Posterior vena cava (tissue), 2 donors: ENCODE measurements at regions of chr1 and their contacts with region 1.

Region 1: DNA sequence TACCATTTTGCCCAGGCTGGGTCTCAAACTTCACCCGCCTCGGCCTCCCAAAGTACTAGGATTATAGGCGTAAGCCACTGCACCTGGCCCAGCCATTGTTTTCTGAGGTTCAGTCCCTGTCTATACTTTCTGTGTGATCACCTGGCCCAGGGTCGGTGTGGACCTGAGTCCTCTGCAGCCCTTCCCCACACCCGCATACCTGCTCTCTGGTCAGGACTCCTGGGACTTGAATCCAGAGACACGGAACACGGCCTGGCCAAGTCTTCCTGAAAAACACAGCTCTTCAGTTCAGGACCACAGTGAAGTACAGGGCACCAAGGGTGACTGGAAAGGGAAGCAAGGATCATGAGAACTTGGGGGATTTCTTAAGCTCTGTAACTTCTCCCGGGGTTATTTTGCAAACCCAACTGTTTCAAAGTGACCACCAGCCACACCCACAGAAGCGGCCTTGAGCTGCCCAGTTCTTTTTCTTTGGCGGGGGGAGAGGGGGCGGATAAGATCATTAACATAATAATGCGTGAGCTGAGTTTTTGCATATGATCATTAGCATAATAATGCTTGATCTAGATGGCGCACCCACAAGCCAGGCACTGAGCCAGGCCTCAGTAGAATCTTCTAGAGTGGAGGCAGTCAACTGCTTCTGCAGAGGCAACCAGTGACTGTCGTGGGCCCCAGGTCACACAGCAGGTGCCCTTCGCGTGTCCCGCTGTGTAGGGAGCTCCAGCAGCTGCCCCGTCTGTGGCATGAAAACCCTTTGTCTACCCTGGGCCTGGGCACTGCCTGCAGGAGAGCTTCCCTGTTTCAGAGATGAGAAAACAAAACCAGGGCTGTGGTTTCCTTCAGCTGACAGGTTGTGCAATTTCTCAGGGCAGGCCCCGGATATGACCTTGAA is 1.7 kb upstream of the NADK start:
- DNase-seq: peak; percentile 88

Region 2: DNA sequence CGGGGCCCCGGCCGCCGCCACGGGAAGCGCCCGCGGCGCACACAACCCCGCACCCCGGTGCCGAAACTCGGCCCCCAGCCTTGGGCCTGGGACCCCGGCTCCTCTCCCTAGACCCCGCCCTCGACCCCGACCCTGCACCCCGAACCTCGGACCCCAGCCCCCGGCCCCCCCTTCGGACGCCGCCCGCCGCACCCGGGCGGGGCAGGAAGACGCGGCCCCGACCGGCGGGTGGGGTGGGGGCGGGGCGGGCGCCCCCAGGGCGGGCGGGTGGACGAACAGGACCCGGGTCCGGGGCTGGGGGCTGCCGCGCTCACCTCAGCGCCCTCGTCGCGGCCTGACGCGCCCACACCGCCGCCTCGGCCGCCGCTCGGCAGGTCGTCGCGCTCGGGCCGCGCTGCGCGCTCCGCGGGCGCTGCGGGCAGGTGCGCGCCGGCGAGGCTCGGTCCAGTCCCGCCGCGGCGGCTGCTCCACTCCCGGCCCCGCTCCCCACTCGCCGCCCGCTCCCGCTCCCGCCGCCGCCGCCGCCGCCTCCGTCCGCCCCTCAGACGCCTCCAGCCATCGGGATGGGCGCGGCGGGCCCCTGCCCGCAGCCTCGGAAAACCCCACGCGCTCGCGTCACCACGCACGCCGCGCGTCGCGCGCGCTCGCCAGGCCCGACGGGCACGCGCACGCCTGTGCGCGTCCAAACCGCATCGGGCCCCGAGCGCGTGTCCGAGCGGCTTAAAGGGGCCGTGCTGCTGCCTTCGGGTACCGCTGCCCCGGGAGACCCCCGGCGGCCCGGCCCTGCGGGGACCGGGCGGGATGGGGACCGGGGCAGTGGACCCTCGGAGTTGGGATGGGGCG is 110.8 kb after region 1 on chr1 and contains the start of gene GNB1:
- intact Hi-C with region 1: loop called in 1 of 2 experiments (anchors 10 kb)
- DNase-seq: peak; percentile 96
- total RNA-seq, gene GNB1: 318 to 379 TPM

Region 3: GRCh38 chr1:2300851-2301606 is 521.1 kb after region 1 on chr1:
- intact Hi-C with region 1: loop called in 1 of 2 experiments (anchors 5 kb)
- DNase-seq: peak; percentile 97